Ovary (tissue), 10 donors: ENCODE measurements at regions of chr19 and their contacts with region 1.

Region 1: GRCh38 chr19:34974646-34975045 is 10.6 kb upstream of the ZNF792 start:
- DNase-seq: no peak
- H3K4me3 ChIP-seq: no peak overlapping the region
- H3K27ac ChIP-seq: no peak overlapping the region
- H3K4me1 ChIP-seq: no peaks in the 10 kb centered on the region
- H3K27me3 ChIP-seq: no peaks in the 10 kb centered on the region
- CTCF ChIP-seq: no peak
- EP300 ChIP-seq: no peak
- POLR2A ChIP-seq: no peak

Region 2: GRCh38 chr19:35013031-35013819 is 38.6 kb after region 1 on chr19:
- intact Hi-C with region 1: loop called (anchors 2 to 5 kb)
- DNase-seq: peak; percentile 69 to 88 (median 77)
- H3K4me3 ChIP-seq: no peak overlapping the region
- H3K27ac ChIP-seq: peak overlapping the region in 1 of 2 donors; percentile 2
- H3K4me1 ChIP-seq: no peaks in the 10 kb centered on the region
- H3K27me3 ChIP-seq: no peaks in the 10 kb centered on the region
- CTCF ChIP-seq: peak; percentile 90 to 96 (median 94)
- EP300 ChIP-seq: no peak
- POLR2A ChIP-seq: no peak

Region 3: GRCh38 chr19:35040826-35041547 is 66.3 kb after region 1 on chr19:
- intact Hi-C with region 1: no loop called
- DNase-seq: peak; percentile 89 to 98 (median 93)
- H3K4me3 ChIP-seq: no peak overlapping the region
- H3K27ac ChIP-seq: peak overlapping the region; percentile 33 to 82
- H3K4me1 ChIP-seq: peaks cover 18% of the 10 kb centered on the region
- H3K27me3 ChIP-seq: no peaks in the 10 kb centered on the region
- CTCF ChIP-seq: no peak
- EP300 ChIP-seq: peak; percentile 74
- POLR2A ChIP-seq: no peak

Region 4: GRCh38 chr19:35090506-35091237 is 116.0 kb after region 1 on chr19:
- intact Hi-C with region 1: loop called in 3 of 4 experiments (anchors 2 to 10 kb)
- DNase-seq: peak; percentile 36 to 65 (median 52)
- H3K4me3 ChIP-seq: no peak overlapping the region
- H3K27ac ChIP-seq: no peak overlapping the region
- H3K4me1 ChIP-seq: no peaks in the 10 kb centered on the region
- H3K27me3 ChIP-seq: no peaks in the 10 kb centered on the region
- CTCF ChIP-seq: peak; percentile 14 to 49 (median 41)
- EP300 ChIP-seq: no peak
- POLR2A ChIP-seq: no peak